Activated T-helper 2 cell treated with anti-CD3 and anti-CD28 coated beads, Interferon-gamma antibody, Interleukin-2, Interleukin-4, amounts not matched to agents 10 μg/mL and 5 μg/mL and 100 μg/mL, durations not matched to agents 14 hours and 24 hours and 36 hours (primary cell): ENCODE measurements at regions of chr22 and their contacts with region 1.

Region 1: DNA sequence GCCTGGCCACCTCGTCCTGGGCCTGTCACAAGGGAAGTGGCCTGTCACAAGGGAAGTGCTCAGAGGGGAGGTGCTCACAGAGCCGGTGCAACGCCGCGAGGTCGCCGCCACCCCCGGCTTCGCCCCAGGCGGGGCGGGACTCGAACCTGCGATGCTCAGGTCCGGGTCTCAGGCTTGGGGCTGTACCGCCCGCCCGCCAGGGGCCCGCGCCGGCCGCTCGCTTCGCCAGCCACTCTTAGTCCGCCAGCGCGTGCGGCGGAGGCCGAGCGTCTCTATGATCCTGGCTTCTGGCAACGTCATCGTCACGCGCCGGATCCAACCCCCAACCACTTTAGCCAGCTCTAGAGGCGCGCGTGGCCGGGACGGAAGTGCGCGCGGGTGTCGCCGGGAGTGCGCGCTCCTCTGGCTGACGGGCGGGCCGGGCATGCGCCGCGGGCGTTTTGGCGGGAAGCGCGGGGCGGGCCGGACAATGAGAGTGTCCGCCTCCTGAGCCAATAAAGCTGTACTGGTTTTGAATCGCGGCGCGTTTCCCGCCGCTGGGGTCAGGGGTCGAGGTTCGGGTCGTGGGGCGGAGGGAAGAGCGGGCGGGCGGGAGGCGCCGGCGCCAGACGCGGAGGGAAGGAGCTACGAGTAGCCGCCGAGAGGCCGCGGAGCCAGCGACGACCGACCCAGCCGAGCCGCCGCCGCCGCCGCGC is at the start of gene TRMT2A:
- DNase-seq: peak; percentile 97
- H3K4me3 Mint-ChIP-seq: peak within 1 kb of the TSS; percentile 94
- H3K27ac Mint-ChIP-seq: peak within 1 kb of the TSS; percentile 97
- H3K4me1 Mint-ChIP-seq: peaks cover 21% of the 10 kb centered on the region
- H3K27me3 Mint-ChIP-seq: no peaks in the 10 kb centered on the region
- total RNA-seq, gene TRMT2A: 94.1 and 103 TPM in 2 replicates

Region 2: GRCh38 chr22:19854778-19855503 is 262.2 kb before region 1 on chr22 and contains the starts of genes GNB1L and RTL10:
- intact Hi-C with region 1: loop called (anchors 5 kb)
- DNase-seq: peak; percentile 95
- H3K4me3 Mint-ChIP-seq: peak within 1 kb of the TSS; percentile 98
- H3K27ac Mint-ChIP-seq: peak within 1 kb of the TSS; percentile 93
- H3K4me1 Mint-ChIP-seq: peaks cover 35% of the 10 kb centered on the region
- H3K27me3 Mint-ChIP-seq: no peaks in the 10 kb centered on the region
- total RNA-seq, gene GNB1L: 14.7 and 17.7 TPM in 2 replicates
- total RNA-seq, gene RTL10: 16.6 and 19.0 TPM in 2 replicates

Region 3: GRCh38 chr22:20020533-20021195 is 96.4 kb before region 1 on chr22 and contains the start of gene TANGO2:
- intact Hi-C with region 1: loop called (anchors 2 kb)
- DNase-seq: peak; percentile 91
- H3K4me3 Mint-ChIP-seq: peak within 1 kb of the TSS; percentile 91
- H3K27ac Mint-ChIP-seq: peak within 1 kb of the TSS; percentile 80
- H3K4me1 Mint-ChIP-seq: peaks cover 17% of the 10 kb centered on the region
- H3K27me3 Mint-ChIP-seq: peaks cover 8% of the 10 kb centered on the region
- total RNA-seq, gene TANGO2: 27.4 and 30.0 TPM in 2 replicates

Region 4: GRCh38 chr22:20079745-20080444 is 37.2 kb before region 1 on chr22 and contains the start of gene DGCR8:
- intact Hi-C with region 1: loop called (anchors 2 kb)
- DNase-seq: peak; percentile 66
- H3K4me3 Mint-ChIP-seq: peak within 1 kb of the TSS; percentile 88
- H3K27ac Mint-ChIP-seq: peak within 1 kb of the TSS; percentile 75
- H3K4me1 Mint-ChIP-seq: peaks cover 25% of the 10 kb centered on the region
- H3K27me3 Mint-ChIP-seq: no peaks in the 10 kb centered on the region
- total RNA-seq, gene DGCR8: 63.1 and 66.4 TPM in 2 replicates

Region 5: DNA sequence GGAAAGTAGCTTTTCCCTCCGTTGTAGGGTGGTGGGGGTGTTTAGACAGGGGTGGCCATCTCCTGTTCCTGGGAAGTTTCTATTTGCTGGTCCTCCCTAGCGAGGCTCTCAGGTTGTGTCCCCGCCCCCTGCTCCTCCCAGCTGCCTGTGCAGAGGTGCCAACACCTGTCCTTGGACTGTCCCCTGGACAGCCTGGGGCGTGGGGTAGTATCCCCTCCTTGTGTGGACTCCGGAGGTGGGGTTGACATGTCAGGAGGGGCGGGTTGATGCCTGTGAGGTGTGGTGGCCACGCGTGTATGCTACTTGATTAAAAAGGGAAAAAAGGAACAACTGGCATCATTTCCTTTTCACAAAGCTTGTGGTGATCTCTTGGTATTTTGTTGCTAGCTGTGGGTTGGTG is 15.5 kb before region 1 on chr22:
- intact Hi-C with region 1: loop called (anchors 2 kb)
- DNase-seq: no peak
- H3K4me3 Mint-ChIP-seq: no peak overlapping the region
- H3K27ac Mint-ChIP-seq: peak overlapping the region; percentile 86
- H3K4me1 Mint-ChIP-seq: peaks cover 42% of the 10 kb centered on the region
- H3K27me3 Mint-ChIP-seq: no peaks in the 10 kb centered on the region

Region 6: GRCh38 chr22:20130739-20131596 is 13.9 kb after region 1 on chr22:
- intact Hi-C with region 1: loop called (anchors 1 kb)
- DNase-seq: peak; percentile 55
- H3K4me3 Mint-ChIP-seq: peak overlapping the region; percentile 37
- H3K27ac Mint-ChIP-seq: no peak overlapping the region
- H3K4me1 Mint-ChIP-seq: peaks cover 12% of the 10 kb centered on the region
- H3K27me3 Mint-ChIP-seq: no peaks in the 10 kb centered on the region

Region 7: DNA sequence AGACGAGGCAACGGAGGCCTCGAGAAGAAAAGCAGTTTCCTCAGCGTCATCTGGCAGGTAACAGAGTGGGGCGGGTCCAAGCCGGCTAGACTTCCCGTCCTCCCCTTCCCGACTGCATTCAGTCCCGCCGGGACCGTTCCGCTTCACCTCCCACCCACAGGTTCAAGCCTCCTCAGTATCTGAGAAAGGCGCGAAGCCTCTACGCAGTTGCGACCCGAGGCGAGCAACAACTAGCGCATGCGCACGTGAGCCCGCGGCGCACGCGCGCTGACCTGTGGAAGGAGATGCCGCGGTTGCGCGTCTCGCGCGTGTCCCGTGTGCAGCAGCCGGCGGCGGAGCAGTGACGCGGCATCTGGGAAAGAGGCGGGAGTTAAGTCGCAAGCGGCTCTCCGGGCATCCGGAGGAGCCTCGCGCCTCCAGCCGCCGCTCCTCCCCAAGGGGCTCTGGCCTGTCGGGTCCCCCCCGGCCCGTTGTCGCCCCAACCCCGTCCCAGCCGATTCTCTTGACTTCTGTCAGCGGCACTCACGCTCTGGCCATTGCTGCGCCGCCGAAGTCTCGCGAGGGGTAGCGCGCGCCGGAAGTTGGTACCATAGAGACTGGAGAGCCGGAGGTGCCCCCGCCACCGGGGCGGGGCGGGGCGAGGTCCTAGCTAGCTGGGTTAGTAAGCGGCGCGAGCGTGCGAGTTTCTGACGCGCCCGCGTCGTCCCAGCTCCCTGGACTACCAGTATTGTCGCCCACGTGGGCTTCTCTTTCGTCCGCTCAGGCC is 884.6 kb after region 1 on chr22 and contains the start of gene THAP7:
- intact Hi-C with region 1: loop called (anchors 5 kb)
- DNase-seq: peak; percentile 95
- H3K4me3 Mint-ChIP-seq: peak within 1 kb of the TSS; percentile 95
- H3K27ac Mint-ChIP-seq: peak within 1 kb of the TSS; percentile 98
- H3K4me1 Mint-ChIP-seq: peaks cover 15% of the 10 kb centered on the region
- H3K27me3 Mint-ChIP-seq: no peaks in the 10 kb centered on the region
- total RNA-seq, gene THAP7: 25.8 and 25.9 TPM in 2 replicates